HAP-1 (cell line): ENCODE measurements at regions of chr1 and their contacts with region 1.

Region 1: DNA sequence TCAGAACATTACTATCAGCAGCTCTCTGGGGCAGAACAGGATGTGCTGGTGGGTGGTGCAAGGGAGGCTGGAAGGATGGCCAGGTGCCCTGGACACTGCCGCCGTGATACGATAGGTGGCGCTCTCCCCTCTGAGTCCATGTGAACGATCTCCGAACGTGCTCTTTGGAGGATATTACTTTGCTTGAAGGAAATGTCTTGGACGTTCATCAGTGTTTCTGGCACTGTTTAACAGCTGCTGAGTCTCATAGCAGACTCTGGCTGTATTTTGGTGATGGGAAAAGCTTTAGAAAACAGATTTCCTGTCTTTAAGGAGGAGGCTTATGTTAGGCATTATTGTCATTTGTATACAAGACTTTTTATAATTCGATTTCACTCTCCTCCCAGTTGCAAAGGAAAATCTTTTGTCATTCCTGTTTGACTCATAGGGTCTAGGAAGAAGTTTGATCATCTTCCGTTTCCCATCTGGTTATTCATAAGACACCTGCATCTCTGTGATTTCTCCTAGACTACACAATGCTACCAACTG is 386.2 kb upstream of the ADGRL2 start:
- DNase-seq: peak; percentile 76 to 89
- H3K4me3 ChIP-seq: no peak overlapping the region
- H3K4me1 ChIP-seq: peaks cover 11% of the 10 kb centered on the region
- H3K27me3 ChIP-seq: no peaks in the 10 kb centered on the region

Region 2: GRCh38 chr1:81549604-81550127 is 135.1 kb after region 1 on chr1:
- in situ Hi-C with region 1: loop called (anchors 10 kb)
- DNase-seq: peak; percentile 28 to 75
- H3K4me3 ChIP-seq: no peak overlapping the region
- H3K4me1 ChIP-seq: peaks cover 36% of the 10 kb centered on the region
- H3K27me3 ChIP-seq: no peaks in the 10 kb centered on the region